ENCODE measurements at regions of chr17 and their contacts with region 1.

Region 1: DNA sequence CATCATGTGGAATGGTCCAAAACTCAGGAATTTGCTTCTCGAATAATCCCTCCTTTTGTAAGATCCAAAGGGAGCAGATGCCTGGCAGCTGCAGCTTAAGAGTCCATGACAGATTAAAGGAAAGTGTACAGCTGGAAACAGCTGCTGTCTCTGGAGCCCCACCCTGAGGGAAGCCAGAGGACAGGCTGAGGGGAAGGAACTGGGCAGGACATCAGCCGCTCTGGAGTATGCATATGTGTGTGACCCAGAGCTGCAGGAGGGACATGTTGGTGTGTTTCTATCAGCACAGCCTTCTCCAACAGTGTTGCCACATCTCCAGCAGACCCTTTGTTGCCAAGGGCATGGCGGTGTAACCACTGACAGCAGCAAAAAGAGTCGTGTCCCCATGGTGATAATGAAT is 46.2 kb downstream of the CYB561 start:
- DNase-seq: no peak
- ATAC-seq: no peak
- H3K4me3 ChIP-seq: no peak overlapping the region
- H3K4me3 Mint-ChIP-seq: no peak overlapping the region
- H3K27ac ChIP-seq: no peak overlapping the region
- H3K27ac Mint-ChIP-seq: no peak overlapping the region
- H3K4me1 ChIP-seq: no peaks in the 10 kb centered on the region
- H3K4me1 Mint-ChIP-seq: no peaks in the 10 kb centered on the region
- H3K27me3 ChIP-seq: no peaks in the 10 kb centered on the region
- H3K27me3 Mint-ChIP-seq: no peaks in the 10 kb centered on the region
- CTCF ChIP-seq: no peak

Region 2: GRCh38 chr17:62987137-62987536 is 412.7 kb before region 1 on chr17:
- CTCF ChIA-PET with region 1: no interaction called
- POLR2A ChIA-PET with region 1: no interaction called
- intact Hi-C with region 1: loop called in 1 of 2 experiments (anchors 10 kb)
- DNase-seq: no peak
- ATAC-seq: no peak
- H3K4me3 ChIP-seq: no peak overlapping the region
- H3K4me3 Mint-ChIP-seq: no peak overlapping the region
- H3K27ac ChIP-seq: no peak overlapping the region
- H3K27ac Mint-ChIP-seq: no peak overlapping the region
- H3K4me1 ChIP-seq: no peaks in the 10 kb centered on the region
- H3K4me1 Mint-ChIP-seq: peaks cover 7% of the 10 kb centered on the region
- H3K27me3 ChIP-seq: no peaks in the 10 kb centered on the region
- H3K27me3 Mint-ChIP-seq: no peaks in the 10 kb centered on the region
- CTCF ChIP-seq: no peak

Region 3: DNA sequence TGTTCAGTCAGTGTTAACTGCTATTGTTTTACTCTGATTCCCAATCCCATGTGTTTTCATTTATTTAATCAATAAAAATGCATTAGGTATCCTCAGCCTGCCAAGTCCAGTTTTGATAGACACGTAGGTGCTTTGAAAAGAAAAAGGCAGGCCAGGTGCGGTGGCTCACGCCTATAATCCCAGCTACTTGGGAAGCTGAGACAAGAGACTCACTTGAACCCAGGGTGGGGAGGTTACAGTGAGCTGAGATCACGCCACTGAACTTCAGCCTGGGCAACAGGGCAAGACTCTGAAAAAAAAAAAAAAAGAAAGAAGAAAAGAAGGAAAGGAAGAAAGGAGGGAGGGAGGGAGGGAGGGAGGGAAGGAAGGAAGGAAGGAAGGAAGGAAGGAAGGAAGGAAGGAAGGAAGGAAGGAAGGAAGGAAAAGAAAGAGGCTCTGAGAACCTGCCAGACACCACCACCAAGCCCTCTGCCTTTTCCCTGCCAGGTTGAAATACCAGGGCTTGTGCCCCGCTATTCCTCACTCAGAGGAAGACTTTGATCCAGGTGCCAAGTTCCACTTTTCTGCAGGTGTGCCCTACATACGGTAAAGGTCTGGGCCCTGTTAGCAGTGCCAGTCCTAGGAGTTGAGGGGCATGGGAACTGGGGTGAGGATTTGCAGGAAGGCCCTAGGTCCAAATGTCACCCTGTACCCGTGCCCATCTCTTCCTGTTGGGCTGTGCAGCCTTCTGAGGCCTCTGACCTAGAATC is 113.2 kb after region 1 on chr17:
- CTCF ChIA-PET with region 1: no interaction called
- POLR2A ChIA-PET with region 1: no interaction called
- intact Hi-C with region 1: no loop called
- DNase-seq: no peak
- ATAC-seq: no peak
- H3K4me3 ChIP-seq: no peak overlapping the region
- H3K4me3 Mint-ChIP-seq: no peak overlapping the region
- H3K27ac ChIP-seq: no peak overlapping the region
- H3K27ac Mint-ChIP-seq: no peak overlapping the region
- H3K4me1 ChIP-seq: no peaks in the 10 kb centered on the region
- H3K4me1 Mint-ChIP-seq: no peaks in the 10 kb centered on the region
- H3K27me3 ChIP-seq: peaks cover 0 to 2% of the 10 kb centered on the region in 2 experiments
- H3K27me3 Mint-ChIP-seq: peaks cover 9% of the 10 kb centered on the region
- CTCF ChIP-seq: no peak